ENCODE measurements at regions of chr18 and their contacts with region 1.

Region 1: GRCh38 chr18:62790871-62791772 is 75.8 kb downstream of the PHLPP1 start:
- DNase-seq: no peak
- H3K4me3 ChIP-seq: no peak overlapping the region
- H3K27ac ChIP-seq: peak overlapping the region in 1 of 2 donors; percentile 23
- H3K4me1 ChIP-seq: peaks cover 0 to 10% of the 10 kb centered on the region in 2 donors
- H3K27me3 ChIP-seq: no peaks in the 10 kb centered on the region
- CTCF ChIP-seq: no peak
- POLR2A ChIP-seq: no peak

Region 2: DNA sequence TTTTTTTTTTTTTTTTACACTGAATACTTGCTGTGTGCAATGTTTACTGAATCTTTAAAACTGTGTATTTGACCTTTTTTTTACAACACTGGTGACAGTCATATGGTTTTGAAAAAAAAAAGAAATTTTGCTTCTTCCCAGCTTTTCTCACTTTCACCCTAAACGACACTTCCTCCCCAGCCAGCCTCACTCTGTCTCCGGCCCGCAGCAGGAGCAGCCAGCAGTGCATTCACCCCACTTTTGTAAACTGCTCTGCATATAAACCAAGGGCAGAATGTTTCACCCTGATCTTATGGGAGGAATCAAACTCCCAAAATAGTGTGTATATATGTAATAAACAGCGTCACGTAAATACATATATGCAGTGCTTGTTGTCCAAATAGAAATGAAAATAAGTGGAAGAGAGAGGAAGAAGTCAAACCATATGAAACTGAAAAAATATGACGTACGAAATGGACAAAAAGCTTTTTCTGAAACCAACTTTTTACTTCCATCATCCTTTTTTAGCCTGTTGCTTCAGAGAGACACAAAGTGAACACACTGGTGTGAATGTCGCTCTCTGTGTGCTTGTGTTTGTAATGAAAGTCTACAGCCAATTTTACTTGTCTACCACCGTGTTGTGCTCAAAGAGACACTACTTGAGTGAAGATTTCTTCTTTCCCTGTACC is 214.1 kb before region 1 on chr18:
- intact Hi-C with region 1: no loop called
- DNase-seq: no peak
- H3K4me3 ChIP-seq: no peak overlapping the region
- H3K27ac ChIP-seq: no peak overlapping the region
- H3K4me1 ChIP-seq: no peaks in the 10 kb centered on the region
- H3K27me3 ChIP-seq: no peaks in the 10 kb centered on the region
- CTCF ChIP-seq: no peak
- POLR2A ChIP-seq: no peak

Region 3: DNA sequence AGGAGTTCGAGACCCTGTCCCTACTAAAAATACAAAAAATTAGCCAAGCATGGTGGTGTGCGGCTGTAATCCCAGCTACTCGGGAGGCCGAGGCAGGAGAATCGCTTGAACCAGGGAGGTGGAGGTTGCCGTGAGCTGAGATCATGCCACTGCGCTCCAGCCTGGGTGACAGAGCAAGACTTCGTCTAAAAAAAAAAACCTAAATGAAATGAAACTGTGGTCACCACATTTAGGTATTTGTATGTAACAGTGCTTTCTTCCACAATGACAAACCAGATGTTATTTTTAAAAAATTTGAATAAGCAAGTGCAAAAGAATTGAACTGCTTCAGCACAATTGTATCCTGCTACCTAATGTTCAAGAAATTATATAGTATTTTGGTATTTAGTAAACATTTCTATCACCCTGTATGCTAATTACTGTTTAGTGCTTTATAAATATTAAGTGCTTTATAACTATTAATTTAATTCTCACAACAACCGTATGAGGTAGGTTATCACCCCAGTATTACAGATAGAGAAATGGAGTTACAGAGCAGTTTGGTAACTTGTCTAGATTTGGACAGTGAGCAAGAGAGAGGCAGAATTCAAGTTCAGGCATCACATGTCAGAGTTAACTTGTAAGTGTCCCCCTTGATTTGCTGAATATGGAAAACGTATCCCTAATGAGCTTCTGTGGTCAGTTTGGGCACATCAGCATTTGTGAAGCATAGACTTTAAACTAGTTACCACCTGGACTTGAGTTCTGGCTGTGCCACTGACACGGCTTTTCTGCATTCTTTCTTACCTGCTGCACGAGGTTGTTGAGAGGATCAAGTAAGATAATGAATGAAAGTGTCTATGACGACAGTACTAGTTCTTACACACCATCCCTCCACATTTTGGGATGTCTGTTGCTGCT is 61.4 kb before region 1 on chr18:
- intact Hi-C with region 1: loop called (anchors 10 kb)
- DNase-seq: no peak
- H3K4me3 ChIP-seq: no peak overlapping the region
- H3K27ac ChIP-seq: no peak overlapping the region
- H3K4me1 ChIP-seq: peaks cover 0 to 3% of the 10 kb centered on the region in 2 donors
- H3K27me3 ChIP-seq: no peaks in the 10 kb centered on the region
- CTCF ChIP-seq: no peak
- POLR2A ChIP-seq: no peak